Right ventricle myocardium superior (tissue), 1 donor: ENCODE measurements at regions of chr1 and their contacts with region 1.

Region 1: GRCh38 chr1:183881387-183882131 is 76.6 kb downstream of the RGL1 start:
- DNase-seq: peak; percentile 66
- ATAC-seq: peak; percentile 57

Region 2: GRCh38 chr1:183812686-183813569 is 68.6 kb before region 1 on chr1:
- intact Hi-C with region 1: loop called (anchors 10 kb)
- DNase-seq: no peak
- ATAC-seq: peak; percentile 18

Region 3: DNA sequence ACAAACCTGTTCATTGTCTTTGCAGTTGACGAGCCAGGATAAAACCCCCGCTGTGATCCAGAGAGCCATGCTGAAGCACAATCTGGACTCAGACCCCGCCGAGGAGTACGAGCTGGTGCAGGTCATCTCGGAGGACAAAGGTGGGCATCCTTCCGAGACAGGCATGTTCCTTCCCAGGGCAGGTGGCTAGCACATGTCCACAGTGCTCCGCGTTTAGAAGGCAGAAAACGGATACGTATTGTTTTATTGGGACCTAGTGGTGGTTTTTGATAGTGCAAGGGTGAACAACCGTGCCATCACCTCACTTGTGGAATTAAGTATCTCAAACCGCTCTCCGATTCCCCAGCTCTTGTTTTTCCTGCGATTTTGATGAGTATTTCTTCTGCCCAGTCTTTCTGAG is 40.6 kb after region 1 on chr1:
- intact Hi-C with region 1: no loop called
- DNase-seq: no peak
- ATAC-seq: no peak